Activated B cell treated with CpG ODN at 0.5 μM for 24 hours (primary cell): ENCODE measurements at regions of chr11 and their contacts with region 1.

Region 1: DNA sequence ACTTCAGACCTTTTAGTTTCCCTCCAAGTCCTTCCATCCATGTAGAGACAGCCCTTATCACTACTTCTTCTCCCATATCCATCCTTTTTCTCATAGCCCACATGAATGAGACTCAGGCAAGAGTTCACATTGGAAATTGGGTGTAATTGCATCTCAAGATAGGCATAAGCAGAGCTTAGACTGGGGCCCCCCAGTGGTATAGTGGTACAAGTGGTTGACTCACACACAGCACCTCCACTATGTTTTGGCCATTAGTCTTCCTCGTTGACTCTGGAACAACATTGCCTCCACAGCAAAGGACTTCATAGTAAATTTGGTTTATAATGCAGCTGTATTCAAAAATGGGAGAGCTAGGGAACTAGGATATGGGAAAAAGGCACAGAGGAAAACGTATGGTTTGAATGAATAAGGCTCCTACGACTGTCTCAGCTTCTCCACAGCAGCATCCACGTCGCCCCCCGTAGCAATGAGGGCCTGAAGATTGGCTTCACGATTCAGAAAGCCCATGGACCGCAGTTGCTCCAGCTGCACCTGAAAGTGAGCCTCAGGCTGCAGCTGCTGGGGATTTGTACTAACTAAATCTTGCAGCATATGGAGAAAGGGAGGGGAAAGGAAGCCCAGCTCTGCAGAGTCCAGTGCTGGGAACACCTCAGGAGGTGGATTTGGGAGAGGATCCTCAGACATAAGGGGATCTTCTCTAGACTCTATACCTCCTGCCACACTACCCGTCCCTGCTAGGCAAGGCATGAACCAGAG is 2.4 kb downstream of the UBQLN3 start:
- DNase-seq: no peak
- ATAC-seq: no peak
- H3K4me3 Mint-ChIP-seq: no peak overlapping the region
- H3K27ac Mint-ChIP-seq: no peak overlapping the region
- H3K4me1 Mint-ChIP-seq: no peaks in the 10 kb centered on the region
- H3K27me3 Mint-ChIP-seq: no peaks in the 10 kb centered on the region
- CTCF ChIP-seq: no peak

Region 2: GRCh38 chr11:4436411-4436810 is 1070.9 kb before region 1 on chr11:
- CTCF ChIA-PET with region 1: no interaction called
- POLR2A ChIA-PET with region 1: no interaction called
- intact Hi-C with region 1: loop called (anchors 5 kb)
- DNase-seq: no peak
- ATAC-seq: no peak
- H3K4me3 Mint-ChIP-seq: no peak overlapping the region
- H3K27ac Mint-ChIP-seq: no peak overlapping the region
- H3K4me1 Mint-ChIP-seq: no peaks in the 10 kb centered on the region
- H3K27me3 Mint-ChIP-seq: peaks cover 9% of the 10 kb centered on the region
- CTCF ChIP-seq: no peak